ENCODE measurements at regions of chr6 and their contacts with region 1.

Region 1: GRCh38 chr6:7725849-7726415 is at the start of gene BMP6:
- DNase-seq: peak; percentile 37 to 85 (median 76)
- H3K4me3 ChIP-seq: peak within 1 kb of the TSS; percentile 41 to 89 (median 70)
- H3K27ac ChIP-seq: peak within 1 kb of the TSS in 6 of 59 donors; percentile 15 to 46 (median 30)
- H3K27me3 ChIP-seq: peaks cover 0 to 58% (median 29%) of the 10 kb centered on the region in 45 donors
- CTCF ChIP-seq: peak in 10 of 56 donors; percentile 7 to 35 (median 16)
- total RNA-seq, gene BMP6: 0.64 to 18.3 (median 4.1) TPM

Region 2: GRCh38 chr6:7910654-7911344 is 184.9 kb after region 1 on chr6 and contains the start of gene TXNDC5:
- intact Hi-C with region 1: loop called (anchors 5 to 10 kb)
- DNase-seq: peak; percentile 52 to 86 (median 68)
- H3K4me3 ChIP-seq: peak within 1 kb of the TSS; percentile 60 to 87 (median 78)
- H3K27ac ChIP-seq: peak within 1 kb of the TSS in 58 of 59 donors; percentile 52 to 96 (median 87)
- H3K27me3 ChIP-seq: no peaks in the 10 kb centered on the region
- CTCF ChIP-seq: peak in 6 of 56 donors; percentile 8 to 14 (median 10)
- total RNA-seq, gene TXNDC5: 15.5 to 55.1 (median 26.9) TPM

Region 3: DNA sequence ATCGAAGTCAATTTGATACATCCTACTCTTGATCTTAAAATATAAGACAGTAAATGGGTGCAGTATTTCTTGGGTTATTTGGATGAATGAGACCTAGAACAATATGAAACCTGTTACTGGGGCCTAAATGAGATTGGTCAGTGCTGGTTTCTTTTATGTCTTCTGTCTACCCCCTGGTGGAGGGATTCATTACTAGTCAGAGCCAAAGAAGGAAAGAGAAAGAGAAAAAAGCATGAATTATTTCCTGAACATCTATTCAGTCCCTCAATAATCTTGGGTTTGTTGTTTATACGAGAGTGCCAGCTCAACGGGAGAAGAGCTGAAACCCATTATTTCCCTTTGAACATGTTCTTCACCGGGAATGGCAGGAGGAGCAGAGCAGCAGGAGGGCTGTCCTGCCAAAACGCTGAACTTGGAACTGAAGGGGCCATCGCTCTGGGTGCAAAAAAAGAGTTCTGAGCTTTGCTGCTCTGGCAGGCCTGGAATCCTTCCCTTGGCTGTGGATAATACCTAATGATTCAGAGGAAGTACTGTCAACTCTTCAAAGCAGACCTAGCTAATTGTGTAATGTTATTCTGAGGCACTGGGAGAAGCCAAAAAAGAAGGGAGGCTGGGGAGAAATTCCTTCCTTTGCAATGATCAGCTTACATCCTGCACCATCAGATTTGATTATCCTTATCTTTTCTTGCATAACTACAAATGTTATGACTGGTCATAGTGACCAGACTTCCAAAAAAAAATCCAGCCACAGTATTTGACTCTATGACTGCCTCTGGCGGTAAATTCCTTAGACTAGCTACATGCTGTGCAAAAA is 266.3 kb after region 1 on chr6:
- intact Hi-C with region 1: loop called in 1 of 2 experiments (anchors 5 kb)
- DNase-seq: no peak
- H3K4me3 ChIP-seq: peak overlapping the region in 1 of 59 donors; percentile 10
- H3K27ac ChIP-seq: peak overlapping the region in 4 of 59 donors; percentile 11 to 42 (median 26)
- H3K27me3 ChIP-seq: no peaks in the 10 kb centered on the region
- CTCF ChIP-seq: peak in 55 of 56 donors; percentile 43 to 81 (median 60)

Region 4: GRCh38 chr6:8000188-8000596 is 274.3 kb after region 1 on chr6:
- intact Hi-C with region 1: loop called (anchors 5 kb)
- DNase-seq: no peak
- H3K4me3 ChIP-seq: no peak overlapping the region
- H3K27ac ChIP-seq: no peak overlapping the region
- H3K27me3 ChIP-seq: no peaks in the 10 kb centered on the region
- CTCF ChIP-seq: no peak

Region 5: DNA sequence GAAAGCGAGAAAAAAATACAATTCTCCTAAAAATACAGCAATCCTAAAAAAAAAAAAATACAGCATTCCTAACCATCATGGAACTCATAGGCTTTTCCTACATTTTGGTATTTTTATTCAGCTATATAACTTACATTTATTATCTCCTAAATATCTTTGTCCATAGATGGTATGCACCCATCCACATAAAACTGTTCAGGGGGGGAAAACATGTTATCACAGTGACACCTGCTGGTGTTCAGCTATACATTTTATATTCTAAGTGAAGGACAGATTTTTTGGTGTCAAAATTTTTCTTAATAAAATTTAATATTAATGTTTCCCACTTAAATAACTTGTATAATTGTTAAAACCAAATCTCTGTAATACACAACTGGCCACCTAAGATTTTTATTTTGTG is 280.3 kb after region 1 on chr6:
- intact Hi-C with region 1: loop called (anchors 5 kb)
- DNase-seq: no peak
- H3K4me3 ChIP-seq: no peak overlapping the region
- H3K27ac ChIP-seq: no peak overlapping the region
- H3K27me3 ChIP-seq: no peaks in the 10 kb centered on the region
- CTCF ChIP-seq: peak in 55 of 56 donors; percentile 37 to 79 (median 60)

Region 6: GRCh38 chr6:8063761-8064637 is 338.1 kb after region 1 on chr6 and contains the start of gene BLOC1S5:
- intact Hi-C with region 1: loop called (anchors 5 kb)
- DNase-seq: peak; percentile 89 to 97 (median 96)
- H3K4me3 ChIP-seq: peak within 1 kb of the TSS; percentile 67 to 98 (median 87)
- H3K27ac ChIP-seq: peak within 1 kb of the TSS; percentile 58 to 96 (median 90)
- H3K27me3 ChIP-seq: no peaks in the 10 kb centered on the region
- CTCF ChIP-seq: peak in 44 of 56 donors; percentile 18 to 63 (median 38)
- total RNA-seq, gene BLOC1S5: 5.4 to 16.1 (median 9.1) TPM

Region 7: DNA sequence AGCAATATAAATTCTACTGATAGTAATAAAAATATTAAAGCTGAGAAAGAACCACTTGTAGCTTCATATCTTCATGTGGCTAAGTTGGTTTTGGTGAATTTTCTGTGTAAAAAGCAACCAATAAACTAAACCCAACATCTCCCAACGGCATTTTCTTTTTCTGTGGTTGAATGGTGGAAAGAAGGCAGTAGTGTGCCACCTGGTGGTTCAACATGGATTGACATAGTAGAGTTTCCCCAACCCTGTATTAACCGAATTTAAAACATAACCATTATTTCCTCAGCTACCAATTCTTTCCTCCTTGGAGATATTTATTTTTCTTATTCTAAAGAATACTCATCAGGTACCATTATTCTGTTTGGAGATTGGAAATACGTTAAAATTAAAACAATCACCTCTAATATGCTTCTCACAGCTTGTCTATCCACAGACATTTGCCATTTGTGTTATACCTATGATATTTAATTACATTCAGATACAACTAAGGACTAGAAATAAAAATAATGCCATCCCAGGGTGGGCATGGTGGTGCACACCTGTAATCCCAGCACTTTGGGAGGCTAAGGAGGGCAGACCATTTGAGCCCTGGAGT is 493.5 kb after region 1 on chr6:
- intact Hi-C with region 1: loop called in 1 of 2 experiments (anchors 5 kb)
- DNase-seq: peak in 3 of 10 donors; percentile 13 to 22 (median 16)
- H3K4me3 ChIP-seq: peak overlapping the region in 15 of 59 donors; percentile 3 to 41 (median 24)
- H3K27ac ChIP-seq: no peak overlapping the region
- H3K27me3 ChIP-seq: peaks cover 0 to 6% (median 0%) of the 10 kb centered on the region in 45 donors
- CTCF ChIP-seq: peak; percentile 61 to 94 (median 84)